MCF 10A (cell line): ENCODE measurements at regions of chr3 and their contacts with region 1.

Region 1: GRCh38 chr3:192831111-192831644 is 86.5 kb downstream of the MB21D2 start:
- DNase-seq: peak; percentile 47
- H3K4me3 Mint-ChIP-seq: no peak overlapping the region
- H3K27ac Mint-ChIP-seq: no peak overlapping the region
- H3K4me1 Mint-ChIP-seq: peaks cover 38% of the 10 kb centered on the region
- H3K27me3 Mint-ChIP-seq: no peaks in the 10 kb centered on the region
- CTCF ChIP-seq: no peak

Region 2: DNA sequence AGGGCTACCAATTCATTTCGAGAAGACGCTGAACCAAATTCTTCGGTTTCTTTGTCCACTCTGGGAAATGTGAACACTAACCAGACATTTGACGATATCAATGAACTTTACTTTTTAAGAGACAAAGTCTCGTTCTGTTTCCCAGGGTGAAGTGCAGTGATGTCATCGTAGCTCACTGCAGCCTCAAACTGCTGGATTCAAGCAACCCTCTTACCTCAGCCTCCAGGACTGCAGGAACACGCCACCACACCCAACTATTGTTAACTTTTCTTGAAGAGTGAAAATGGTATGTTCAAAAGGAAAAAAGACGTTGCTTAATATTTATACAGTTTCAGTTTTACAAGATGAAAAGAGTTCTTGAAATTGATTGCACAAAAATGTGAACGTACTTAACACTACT is 55.9 kb after region 1 on chr3:
- CTCF ChIA-PET with region 1: interaction called, 9 read pairs
- POLR2A ChIA-PET with region 1: no interaction called
- intact Hi-C with region 1: loop called (anchors 5 kb)
- DNase-seq: peak; percentile 57
- H3K4me3 Mint-ChIP-seq: peak overlapping the region; percentile 47
- H3K27ac Mint-ChIP-seq: peak overlapping the region; percentile 57
- H3K4me1 Mint-ChIP-seq: peaks cover 45% of the 10 kb centered on the region
- H3K27me3 Mint-ChIP-seq: no peaks in the 10 kb centered on the region
- CTCF ChIP-seq: no peak